ENCODE measurements at regions of chr10 and their contacts with region 1.

Region 1: DNA sequence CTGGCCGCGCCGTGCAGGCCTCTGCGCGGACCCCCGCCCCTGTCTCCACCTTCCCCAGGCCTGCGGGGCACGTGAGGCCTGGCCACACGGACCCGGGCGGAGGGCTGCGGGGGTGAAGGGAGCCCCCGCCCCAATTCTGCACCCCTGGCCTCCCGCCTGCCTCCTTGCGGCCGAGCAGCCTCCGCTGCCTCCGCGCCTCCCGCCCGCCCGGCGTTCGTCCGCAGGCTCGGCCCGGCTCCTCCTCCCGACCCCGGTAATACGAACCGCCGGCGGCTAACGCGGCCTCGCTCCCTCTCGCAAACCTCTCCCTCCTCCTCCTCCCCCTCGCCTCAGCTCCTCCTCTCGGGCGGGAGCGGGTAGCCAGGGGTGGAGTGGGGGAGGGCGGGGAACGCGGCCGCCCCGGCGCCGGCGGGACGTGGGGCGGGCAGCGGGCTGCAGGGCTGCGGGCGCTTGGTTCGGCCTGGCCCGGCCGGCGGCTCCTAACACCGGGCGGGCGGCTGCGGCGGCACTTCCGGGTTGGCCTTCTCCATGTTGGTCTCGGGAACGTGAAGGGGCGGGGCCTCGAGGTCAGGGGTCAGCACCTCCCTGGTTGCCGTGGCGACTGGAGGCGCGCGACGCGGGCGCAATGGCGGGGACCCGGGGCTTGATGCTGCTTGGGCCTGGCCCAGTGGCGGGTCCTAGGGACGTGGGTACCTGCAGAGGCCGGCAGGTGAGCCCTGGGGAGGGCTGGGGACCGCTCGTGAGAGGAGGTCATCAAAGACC is at the start of gene RAB11FIP2:
- H3K4me3 Mint-ChIP-seq: peak within 1 kb of the TSS; percentile 82
- H3K27ac Mint-ChIP-seq: peak within 1 kb of the TSS; percentile 84
- H3K4me1 Mint-ChIP-seq: peaks cover 12% of the 10 kb centered on the region
- H3K27me3 Mint-ChIP-seq: no peaks in the 10 kb centered on the region

Region 2: GRCh38 chr10:117375360-117376178 is 671.0 kb before region 1 on chr10 and contains the start of gene PDZD8:
- intact Hi-C with region 1: loop called (anchors 5 kb)
- H3K4me3 Mint-ChIP-seq: peak within 1 kb of the TSS; percentile 95
- H3K27ac Mint-ChIP-seq: peak within 1 kb of the TSS; percentile 92
- H3K4me1 Mint-ChIP-seq: peaks cover 40% of the 10 kb centered on the region
- H3K27me3 Mint-ChIP-seq: peaks cover 9% of the 10 kb centered on the region

Region 3: GRCh38 chr10:118002581-118002980 is 44.0 kb before region 1 on chr10:
- intact Hi-C with region 1: no loop called
- H3K4me3 Mint-ChIP-seq: no peak overlapping the region
- H3K27ac Mint-ChIP-seq: no peak overlapping the region
- H3K4me1 Mint-ChIP-seq: no peaks in the 10 kb centered on the region
- H3K27me3 Mint-ChIP-seq: no peaks in the 10 kb centered on the region

Region 4: DNA sequence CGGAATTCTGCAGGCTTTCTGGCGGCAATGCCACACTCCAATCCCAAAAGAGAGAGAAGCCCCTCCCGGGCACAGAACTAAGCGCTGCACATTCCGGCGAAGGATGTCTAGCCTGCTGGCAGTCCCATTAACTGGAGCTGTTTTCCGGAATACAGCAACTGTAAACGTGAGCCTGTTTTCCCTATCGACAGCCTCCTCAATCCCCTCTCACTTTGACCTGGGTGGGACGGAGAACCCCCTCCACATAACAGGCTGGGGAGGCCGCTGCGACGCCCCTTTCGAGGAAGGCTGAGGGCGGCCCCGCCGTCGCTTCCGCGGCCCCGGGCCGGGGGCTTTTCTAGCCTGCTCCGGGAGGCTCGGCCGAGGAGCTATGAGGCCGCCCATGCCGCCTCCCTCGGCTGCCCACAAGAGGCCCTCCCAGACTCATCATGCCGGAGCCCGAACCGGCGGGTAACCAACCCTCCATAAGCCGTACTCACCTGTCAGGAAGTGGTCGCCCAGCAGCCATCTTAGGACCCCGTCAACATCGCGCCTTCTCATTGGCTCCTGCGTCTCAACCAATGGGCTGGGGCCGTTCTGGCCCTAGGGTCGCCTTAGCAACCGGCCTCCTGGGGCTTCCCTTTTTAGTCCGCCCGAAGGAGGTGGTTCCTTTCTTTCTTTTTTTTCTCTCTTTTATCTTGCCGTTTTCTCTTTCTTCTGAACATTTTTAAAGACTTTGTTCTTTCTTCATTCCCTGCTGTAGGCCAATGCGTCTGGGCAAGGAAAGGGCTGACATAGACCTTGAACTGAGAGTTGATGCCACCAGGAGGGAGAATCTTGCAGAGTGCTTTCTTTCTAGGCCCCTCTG is 295.4 kb after region 1 on chr10 and contains the start of gene FAM204A:
- intact Hi-C with region 1: loop called (anchors 5 kb)
- H3K4me3 Mint-ChIP-seq: peak within 1 kb of the TSS; percentile 89
- H3K27ac Mint-ChIP-seq: peak within 1 kb of the TSS; percentile 88
- H3K4me1 Mint-ChIP-seq: peaks cover 19% of the 10 kb centered on the region
- H3K27me3 Mint-ChIP-seq: peaks cover 9% of the 10 kb centered on the region